ENCODE measurements at regions of chr2 and their contacts with region 1.

Region 1: GRCh38 chr2:214809751-214810564 is 475 bp upstream of the BARD1 start:
- DNase-seq: peak; percentile 100
- ATAC-seq: peak; percentile 85
- H3K4me3 Mint-ChIP-seq: peak overlapping the region; percentile 98
- H3K27ac Mint-ChIP-seq: peak overlapping the region; percentile 92
- H3K4me1 Mint-ChIP-seq: peaks cover 35% of the 10 kb centered on the region
- H3K27me3 Mint-ChIP-seq: no peaks in the 10 kb centered on the region
- CTCF ChIP-seq: no peak

Region 2: DNA sequence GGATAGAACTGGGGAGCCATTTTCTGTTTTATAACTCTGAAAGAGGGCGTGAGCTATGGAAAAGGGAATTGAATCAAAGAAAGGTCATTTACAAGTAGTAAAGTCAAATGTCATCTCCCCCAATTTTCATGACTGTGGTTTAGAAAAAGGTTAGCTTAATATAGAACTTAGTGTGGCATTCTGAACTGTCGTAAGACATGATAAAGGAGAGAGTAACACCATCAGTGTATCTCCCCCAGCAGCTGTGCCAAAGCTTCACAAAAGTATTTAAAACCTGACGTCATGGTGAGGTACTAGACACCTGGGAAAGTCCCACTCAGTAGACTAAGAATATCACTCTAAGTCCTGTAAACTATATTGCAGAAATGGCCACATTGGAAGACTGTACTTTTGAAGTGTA is 1652.7 kb before region 1 on chr2:
- CTCF ChIA-PET with region 1: no interaction called
- POLR2A ChIA-PET with region 1: no interaction called
- intact Hi-C with region 1: loop called (anchors 1 kb)
- DNase-seq: no peak
- ATAC-seq: peak; percentile 88
- H3K4me3 Mint-ChIP-seq: peak overlapping the region; percentile 49
- H3K27ac Mint-ChIP-seq: peak overlapping the region; percentile 80
- H3K4me1 Mint-ChIP-seq: peaks cover 58% of the 10 kb centered on the region
- H3K27me3 Mint-ChIP-seq: no peaks in the 10 kb centered on the region
- CTCF ChIP-seq: no peak

Region 3: GRCh38 chr2:213284105-213285090 is 1525.6 kb before region 1 on chr2 and contains the start of gene SPAG16:
- CTCF ChIA-PET with region 1: no interaction called
- POLR2A ChIA-PET with region 1: no interaction called
- intact Hi-C with region 1: loop called (anchors 1 kb)
- DNase-seq: peak; percentile 89
- ATAC-seq: peak; percentile 98
- H3K4me3 Mint-ChIP-seq: peak within 1 kb of the TSS; percentile 96
- H3K27ac Mint-ChIP-seq: peak within 1 kb of the TSS; percentile 87
- H3K4me1 Mint-ChIP-seq: peaks cover 24% of the 10 kb centered on the region
- H3K27me3 Mint-ChIP-seq: no peaks in the 10 kb centered on the region
- CTCF ChIP-seq: no peak
- total RNA-seq, gene SPAG16: 11.2 and 11.5 TPM in 2 replicates

Region 4: GRCh38 chr2:215311625-215312396 is 501.9 kb after region 1 on chr2 and contains the start of gene ATIC:
- CTCF ChIA-PET with region 1: no interaction called
- POLR2A ChIA-PET with region 1: no interaction called
- intact Hi-C with region 1: loop called (anchors 1 kb)
- DNase-seq: peak; percentile 86
- ATAC-seq: peak; percentile 96
- H3K4me3 Mint-ChIP-seq: peak within 1 kb of the TSS; percentile 95
- H3K27ac Mint-ChIP-seq: peak within 1 kb of the TSS; percentile 91
- H3K4me1 Mint-ChIP-seq: peaks cover 35% of the 10 kb centered on the region
- H3K27me3 Mint-ChIP-seq: no peaks in the 10 kb centered on the region
- CTCF ChIP-seq: no peak
- total RNA-seq, gene ATIC: 161 and 179 TPM in 2 replicates

Measured in activated B cell treated with CpG ODN at 0.5 μM for 24 hours (primary cell).